ENCODE measurements at regions of chr11 and their contacts with region 1.

Region 1: GRCh38 chr11:131674051-131674755 is 303.8 kb downstream of the NTM start:
- DNase-seq: peak; percentile 41 to 55
- H3K4me3 ChIP-seq: no peak overlapping the region
- H3K27ac ChIP-seq: no peak overlapping the region
- H3K4me1 ChIP-seq: no peaks in the 10 kb centered on the region
- H3K27me3 ChIP-seq: peaks cover 46% of the 10 kb centered on the region; the same call in 1 of the 2 replicates
- CTCF ChIP-seq: peak; percentile 85

Region 2: GRCh38 chr11:130918081-130918480 is 756.1 kb before region 1 on chr11:
- CTCF ChIA-PET with region 1: no interaction called
- POLR2A ChIA-PET with region 1: no interaction called
- intact Hi-C with region 1: loop called (anchors 1 kb)
- DNase-seq: no peak
- H3K4me3 ChIP-seq: no peak overlapping the region
- H3K27ac ChIP-seq: no peak overlapping the region
- H3K4me1 ChIP-seq: peaks cover 8% of the 10 kb centered on the region
- H3K27me3 ChIP-seq: peaks cover 39% of the 10 kb centered on the region
- CTCF ChIP-seq: no peak

Region 3: GRCh38 chr11:131195661-131196517 is 478.3 kb before region 1 on chr11:
- CTCF ChIA-PET with region 1: no interaction called
- POLR2A ChIA-PET with region 1: no interaction called
- intact Hi-C with region 1: no loop called
- DNase-seq: no peak
- H3K4me3 ChIP-seq: no peak overlapping the region
- H3K27ac ChIP-seq: no peak overlapping the region
- H3K4me1 ChIP-seq: no peaks in the 10 kb centered on the region
- H3K27me3 ChIP-seq: peaks cover 93% of the 10 kb centered on the region
- CTCF ChIP-seq: no peak